T-cell (primary cell): ENCODE measurements at regions of chr17 and their contacts with region 1.

Region 1: DNA sequence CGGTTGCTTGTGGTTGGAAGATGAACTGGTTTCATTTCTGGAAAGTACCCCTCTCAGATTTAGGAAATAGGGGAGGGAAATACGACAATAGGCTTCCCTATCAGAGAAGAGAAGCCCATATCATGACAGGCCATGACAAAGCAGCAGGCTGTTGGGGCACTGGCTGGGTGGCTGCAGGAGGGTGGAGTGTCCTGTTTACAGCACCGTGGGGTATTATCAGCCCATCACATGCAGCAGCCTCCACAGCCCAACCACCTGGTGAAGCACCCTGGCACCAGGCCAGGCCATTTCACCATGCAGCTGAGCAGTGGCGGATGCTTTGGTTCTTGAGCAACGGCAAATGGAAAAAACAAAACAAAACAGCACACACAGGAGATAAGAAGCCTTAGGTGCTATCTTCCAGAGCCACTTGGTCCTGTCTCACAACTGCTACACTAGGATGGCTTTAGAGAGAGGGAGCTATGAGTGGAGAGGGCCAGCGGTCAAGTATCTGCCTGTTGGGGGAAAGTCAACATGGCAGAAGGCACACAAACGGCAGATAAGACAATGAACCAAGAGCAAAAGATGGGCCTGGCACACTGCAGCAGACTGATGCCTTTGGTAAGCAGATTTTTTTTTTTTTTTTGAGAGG is 24.2 kb downstream of the FAM117A start:
- DNase-seq: peak; percentile 91 to 100 (median 99)
- ATAC-seq: peak; percentile 97 to 99 (median 98)
- H3K4me3 ChIP-seq: peak overlapping the region; percentile 46 to 63
- H3K4me3 Mint-ChIP-seq: peak overlapping the region; percentile 82 to 95 (median 89)
- H3K27ac ChIP-seq: peak overlapping the region; percentile 98
- H3K27ac Mint-ChIP-seq: peak overlapping the region; percentile 100
- H3K4me1 ChIP-seq: peaks cover 72 to 87% of the 10 kb centered on the region in 2 experiments
- H3K4me1 Mint-ChIP-seq: peaks cover 82 to 91% (median 86%) of the 10 kb centered on the region in 3 donors
- H3K27me3 ChIP-seq: no peaks in the 10 kb centered on the region
- H3K27me3 Mint-ChIP-seq: no peaks in the 10 kb centered on the region

Region 2: DNA sequence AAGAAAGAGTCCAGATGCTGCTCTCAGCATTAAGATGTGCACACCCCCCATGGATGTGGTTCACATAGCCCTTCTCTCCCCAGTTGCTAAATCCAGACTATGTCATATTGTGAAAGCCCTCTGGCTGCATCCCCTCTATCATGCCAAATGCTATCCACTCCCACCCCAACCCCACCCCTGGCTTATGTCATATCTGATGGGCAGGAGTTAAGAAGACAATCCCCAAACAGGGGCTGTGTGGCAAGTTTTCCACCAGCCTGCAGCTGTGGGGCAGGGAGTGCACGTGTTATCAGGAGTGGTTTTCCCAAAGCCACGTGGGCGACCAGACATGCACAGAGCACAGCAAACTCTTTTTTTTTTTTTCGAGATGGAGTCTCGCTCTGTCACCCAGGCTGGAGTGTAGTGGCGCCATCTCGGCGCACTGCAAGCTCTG is 14.2 kb after region 1 on chr17:
- CTCF ChIA-PET with region 1: interaction called, 3 to 4 read pairs
- POLR2A ChIA-PET with region 1: interaction called, 4 to 11 read pairs
- DNase-seq: no peak
- ATAC-seq: no peak
- H3K4me3 ChIP-seq: no peak overlapping the region
- H3K4me3 Mint-ChIP-seq: peak overlapping the region in 2 of 3 donors; percentile 6 to 27
- H3K27ac ChIP-seq: peak overlapping the region; percentile 24
- H3K27ac Mint-ChIP-seq: peak overlapping the region; percentile 86 to 96
- H3K4me1 ChIP-seq: peaks cover 25 to 86% of the 10 kb centered on the region in 2 experiments
- H3K4me1 Mint-ChIP-seq: peaks cover 62 to 84% (median 81%) of the 10 kb centered on the region in 3 donors
- H3K27me3 ChIP-seq: no peaks in the 10 kb centered on the region
- H3K27me3 Mint-ChIP-seq: no peaks in the 10 kb centered on the region

Region 3: DNA sequence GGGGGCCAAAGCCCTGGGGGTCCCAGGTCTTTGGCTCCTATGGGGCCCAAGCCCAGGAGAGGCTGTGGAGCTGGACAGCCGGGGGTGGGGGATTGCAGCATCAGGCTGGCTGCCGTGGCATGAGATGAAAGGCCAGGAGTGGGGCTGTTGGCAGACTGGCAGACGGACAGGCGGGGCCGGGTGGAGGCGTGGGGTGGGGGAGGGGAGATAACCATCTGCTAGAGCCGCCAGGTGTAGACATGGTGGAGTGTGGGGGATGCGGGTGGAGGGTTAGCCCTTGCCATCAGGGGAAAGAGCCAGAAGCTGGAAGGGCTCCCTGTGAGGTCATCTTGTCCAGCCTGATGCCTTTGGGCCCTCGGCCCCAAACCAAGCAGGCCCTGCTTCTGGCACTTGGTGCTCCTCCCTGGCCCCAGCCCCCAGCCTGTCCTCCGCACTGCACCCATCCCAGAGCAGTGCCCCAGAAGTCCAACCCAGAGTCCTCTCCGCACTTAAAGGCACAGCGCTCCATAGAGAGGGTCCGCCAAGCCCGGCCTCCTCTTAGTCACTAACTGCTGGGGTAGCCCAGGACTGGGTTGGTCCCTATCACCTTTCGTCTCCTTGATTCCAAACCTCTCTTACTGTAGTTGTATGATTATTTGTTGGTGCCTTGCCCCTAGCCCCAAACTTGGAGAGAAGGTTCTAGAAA is 195.9 kb after region 1 on chr17:
- CTCF ChIA-PET with region 1: no interaction called
- POLR2A ChIA-PET with region 1: no interaction called
- DNase-seq: no peak
- ATAC-seq: no peak
- H3K4me3 ChIP-seq: no peak overlapping the region
- H3K4me3 Mint-ChIP-seq: no peak overlapping the region
- H3K27ac ChIP-seq: no peak overlapping the region
- H3K27ac Mint-ChIP-seq: no peak overlapping the region
- H3K4me1 ChIP-seq: no peaks in the 10 kb centered on the region
- H3K4me1 Mint-ChIP-seq: no peaks in the 10 kb centered on the region
- H3K27me3 ChIP-seq: peaks cover 0 to 60% of the 10 kb centered on the region in 2 experiments
- H3K27me3 Mint-ChIP-seq: peaks cover 31 to 50% of the 10 kb centered on the region in 2 donors